OCI-LY7 (cell line): ENCODE measurements at regions of chr9 and their contacts with region 1.

Region 1: GRCh38 chr9:3732077-3733038 is 206.6 kb upstream of the RFX3 start:
- DNase-seq: peak; percentile 62
- H3K4me3 ChIP-seq: no peak overlapping the region
- H3K27ac ChIP-seq: no peak overlapping the region
- H3K4me1 ChIP-seq: no peaks in the 10 kb centered on the region
- CTCF ChIP-seq: peak; percentile 78

Region 2: DNA sequence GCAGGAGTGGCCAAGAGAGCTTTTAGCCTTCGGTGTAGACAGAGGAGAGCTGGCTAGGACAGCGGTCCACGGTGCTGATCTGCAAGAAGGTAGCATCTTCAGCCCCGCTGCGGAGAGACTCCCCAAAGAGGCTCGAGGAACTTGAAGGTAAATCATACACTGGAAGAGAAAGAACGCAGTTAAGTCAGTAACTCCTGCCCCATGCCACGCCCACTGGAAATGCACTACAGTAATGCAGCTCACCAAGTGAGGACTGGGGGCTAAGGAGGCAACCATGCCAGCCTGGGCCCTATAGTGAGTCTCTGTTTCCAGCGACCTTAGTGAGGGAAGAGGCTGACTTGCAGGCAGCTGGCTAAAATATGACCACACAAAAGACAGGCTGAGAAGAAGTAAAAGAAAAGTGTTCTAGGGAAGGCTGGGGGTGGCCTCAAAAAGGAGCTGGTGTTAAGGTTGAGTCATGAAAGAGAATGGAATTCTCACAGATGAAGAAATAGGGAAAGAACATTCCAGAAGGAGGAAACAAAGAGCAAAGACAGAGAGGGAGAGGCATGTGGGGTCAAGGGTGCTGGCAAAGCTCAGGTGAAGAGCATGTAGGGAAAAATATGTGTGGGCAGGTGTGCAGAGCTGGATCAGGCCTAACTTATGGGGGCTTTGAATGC is 96.0 kb after region 1 on chr9:
- CTCF ChIA-PET with region 1: no interaction called
- POLR2A ChIA-PET with region 1: no interaction called
- intact Hi-C with region 1: no loop called
- DNase-seq: no peak
- H3K4me3 ChIP-seq: no peak overlapping the region
- H3K27ac ChIP-seq: no peak overlapping the region
- H3K4me1 ChIP-seq: no peaks in the 10 kb centered on the region
- CTCF ChIP-seq: no peak

Region 3: GRCh38 chr9:3863111-3863528 is 130.8 kb after region 1 on chr9:
- CTCF ChIA-PET with region 1: no interaction called
- POLR2A ChIA-PET with region 1: no interaction called
- intact Hi-C with region 1: no loop called
- DNase-seq: no peak
- H3K4me3 ChIP-seq: no peak overlapping the region
- H3K27ac ChIP-seq: no peak overlapping the region
- H3K4me1 ChIP-seq: no peaks in the 10 kb centered on the region
- CTCF ChIP-seq: no peak

Region 4: GRCh38 chr9:4117835-4118610 is 385.7 kb after region 1 on chr9:
- CTCF ChIA-PET with region 1: no interaction called
- POLR2A ChIA-PET with region 1: no interaction called
- intact Hi-C with region 1: loop called (anchors 1 kb)
- DNase-seq: peak; percentile 47
- H3K4me3 ChIP-seq: no peak overlapping the region
- H3K27ac ChIP-seq: no peak overlapping the region
- H3K4me1 ChIP-seq: no peaks in the 10 kb centered on the region
- CTCF ChIP-seq: peak; percentile 79

Region 5: GRCh38 chr9:4197548-4197947 is 465.2 kb after region 1 on chr9:
- CTCF ChIA-PET with region 1: no interaction called
- POLR2A ChIA-PET with region 1: no interaction called
- intact Hi-C with region 1: loop called (anchors 5 kb)
- DNase-seq: peak; percentile 15
- H3K4me3 ChIP-seq: no peak overlapping the region
- H3K27ac ChIP-seq: no peak overlapping the region
- H3K4me1 ChIP-seq: no peaks in the 10 kb centered on the region
- CTCF ChIP-seq: peak; percentile 83